ENCODE measurements at regions of chr15 and their contacts with region 1.

Region 1: GRCh38 chr15:64263567-64263966 is 92.4 kb downstream of the CSNK1G1 start:
- DNase-seq: no peak
- H3K4me3 Mint-ChIP-seq: no peak overlapping the region
- H3K27ac Mint-ChIP-seq: no peak overlapping the region
- H3K4me1 Mint-ChIP-seq: peaks cover 32% of the 10 kb centered on the region
- H3K27me3 Mint-ChIP-seq: no peaks in the 10 kb centered on the region

Region 2: DNA sequence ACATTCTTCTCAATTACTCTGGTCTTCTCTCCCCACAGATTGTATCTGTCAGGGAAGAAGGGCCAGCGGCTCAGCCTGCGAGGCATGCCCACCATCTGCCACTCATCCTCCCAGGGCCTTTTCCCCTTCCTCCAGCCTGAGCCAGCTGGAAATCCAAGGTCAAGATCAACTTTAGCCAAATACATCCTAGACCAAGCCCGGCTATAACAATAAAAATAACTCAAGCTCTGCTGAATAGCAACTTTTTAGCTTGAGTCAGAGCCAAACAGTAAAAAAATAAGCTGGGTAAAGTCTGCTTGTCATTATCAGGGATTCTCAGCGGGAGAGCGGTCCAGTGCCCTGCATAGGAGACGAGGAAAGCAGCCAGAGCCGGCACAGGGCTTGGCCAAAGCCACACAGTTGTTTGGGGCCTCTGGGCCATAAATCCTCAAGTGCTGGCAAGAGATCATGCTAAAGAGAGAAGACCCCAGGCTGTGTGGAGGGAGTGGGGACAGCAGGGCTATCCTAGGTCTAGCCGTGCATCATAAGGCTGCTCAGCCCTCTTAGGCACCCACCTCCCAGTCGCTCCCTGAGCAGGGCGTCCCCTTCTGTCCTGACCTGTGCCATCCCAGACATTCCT is 353.6 kb before region 1 on chr15:
- intact Hi-C with region 1: no loop called
- DNase-seq: no peak
- H3K4me3 Mint-ChIP-seq: no peak overlapping the region
- H3K27ac Mint-ChIP-seq: peak overlapping the region; percentile 26
- H3K4me1 Mint-ChIP-seq: peaks cover 18% of the 10 kb centered on the region
- H3K27me3 Mint-ChIP-seq: peaks cover 3% of the 10 kb centered on the region

Region 3: DNA sequence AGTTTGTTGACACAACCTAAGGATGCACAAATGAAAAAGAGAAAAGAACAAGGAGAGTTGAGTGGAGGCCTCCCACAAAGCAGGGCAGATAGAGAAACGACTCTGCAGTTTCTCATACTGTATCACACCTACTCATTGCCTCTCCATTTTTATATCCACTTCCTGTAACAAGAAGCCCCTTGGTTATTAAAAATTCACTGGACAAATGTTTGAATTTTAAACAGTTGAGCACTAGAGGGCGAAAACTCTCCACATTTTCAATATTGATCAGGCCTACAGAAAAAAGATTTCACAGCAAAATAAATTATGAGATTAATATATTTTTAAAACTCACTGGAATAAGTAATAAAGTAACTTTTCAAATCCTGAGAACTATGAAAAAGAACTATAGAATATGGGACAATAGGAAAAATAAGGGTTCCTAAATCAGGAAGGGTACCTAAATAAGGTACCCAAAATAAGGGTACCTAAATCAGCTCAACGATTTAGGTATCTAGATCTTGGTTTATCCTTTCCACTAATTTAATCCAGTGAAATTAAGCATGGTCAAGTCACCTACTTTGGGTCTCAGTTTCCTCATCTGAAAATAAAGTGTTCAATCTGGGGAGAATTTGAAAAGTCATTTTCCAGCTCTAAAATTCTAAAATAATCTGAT is 53.8 kb before region 1 on chr15:
- intact Hi-C with region 1: no loop called
- DNase-seq: no peak
- H3K4me3 Mint-ChIP-seq: no peak overlapping the region
- H3K27ac Mint-ChIP-seq: no peak overlapping the region
- H3K4me1 Mint-ChIP-seq: peaks cover 30% of the 10 kb centered on the region
- H3K27me3 Mint-ChIP-seq: no peaks in the 10 kb centered on the region

Region 4: GRCh38 chr15:64229129-64229724 is 34.3 kb before region 1 on chr15:
- intact Hi-C with region 1: loop called (anchors 5 kb)
- DNase-seq: no peak
- H3K4me3 Mint-ChIP-seq: no peak overlapping the region
- H3K27ac Mint-ChIP-seq: no peak overlapping the region
- H3K4me1 Mint-ChIP-seq: peaks cover 14% of the 10 kb centered on the region
- H3K27me3 Mint-ChIP-seq: no peaks in the 10 kb centered on the region

Measured in activated T-helper 2 cell treated with anti-CD3 and anti-CD28 coated beads, Interferon-gamma antibody, Interleukin-2, Interleukin-4, amounts not matched to agents 10 μg/mL and 5 μg/mL and 100 μg/mL, durations not matched to agents 14 hours and 24 hours and 36 hours (primary cell).